Transverse colon (tissue), 4 donors: ENCODE measurements at regions of chr10 and their contacts with region 1.

Region 1: GRCh38 chr10:129971381-129972144 is 7.5 kb upstream of the EBF3 start:
- DNase-seq: peak; percentile 41
- H3K4me3 ChIP-seq: peak overlapping the region in 3 of 4 donors; percentile 14 to 34 (median 17)
- H3K27ac ChIP-seq: no peak overlapping the region
- H3K4me1 ChIP-seq: peaks cover 4 to 37% (median 17%) of the 10 kb centered on the region in 4 donors
- H3K27me3 ChIP-seq: peaks cover 98% of the 10 kb centered on the region
- CTCF ChIP-seq: peak in 2 of 5 experiments; percentile 42 to 44
- EP300 ChIP-seq: no peak
- POLR2A ChIP-seq: no peak

Region 2: DNA sequence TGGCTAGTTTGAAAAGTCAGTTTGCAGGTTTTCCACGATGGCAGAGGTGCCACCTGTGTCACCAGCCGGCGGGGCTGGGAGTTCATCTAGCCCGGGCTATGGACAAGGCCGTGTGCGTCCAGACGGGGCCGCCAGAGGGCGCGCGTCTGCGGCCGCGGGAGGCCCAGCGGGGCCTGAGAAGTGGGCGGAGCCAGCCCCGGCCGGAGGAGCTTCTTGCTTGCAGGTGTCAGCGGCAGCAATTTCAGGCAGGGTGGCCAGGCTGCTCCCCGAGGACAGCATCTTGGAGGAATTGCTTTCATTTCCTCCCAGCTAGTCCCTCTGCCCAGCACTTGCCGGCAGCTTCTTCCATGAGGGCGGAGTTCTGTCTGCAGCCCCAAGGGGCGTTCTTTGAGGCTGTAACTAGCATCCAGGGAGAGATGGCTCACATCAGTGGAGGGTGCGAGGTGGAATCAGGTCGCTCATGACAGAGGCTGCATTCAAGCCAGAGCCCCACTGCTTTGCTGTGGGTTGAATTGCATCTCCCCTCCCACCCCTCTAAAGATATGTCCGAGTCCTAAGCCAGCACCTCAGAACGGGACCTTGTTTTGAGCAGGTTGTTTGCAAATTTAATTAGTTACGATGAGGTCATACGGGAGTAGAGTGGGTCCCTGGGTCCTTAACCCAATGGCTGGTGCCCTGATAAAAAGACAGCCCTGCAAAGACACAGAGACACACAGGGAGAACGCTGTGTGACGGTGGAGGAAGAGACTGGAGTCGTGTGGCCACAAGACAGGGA is 1759.4 kb before region 1 on chr10:
- in situ Hi-C with region 1: no loop called
- intact Hi-C with region 1: loop called (anchors 5 kb)
- DNase-seq: peak; percentile 90
- H3K4me3 ChIP-seq: no peak overlapping the region
- H3K27ac ChIP-seq: no peak overlapping the region
- H3K4me1 ChIP-seq: peaks cover 0 to 9% (median 2%) of the 10 kb centered on the region in 4 donors
- H3K27me3 ChIP-seq: no peaks in the 10 kb centered on the region
- CTCF ChIP-seq: peak; percentile 78 to 98 (median 96)
- EP300 ChIP-seq: no peak
- POLR2A ChIP-seq: no peak

Region 3: GRCh38 chr10:130282492-130283233 is 311.1 kb after region 1 on chr10:
- in situ Hi-C with region 1: no loop called
- intact Hi-C with region 1: no loop called
- DNase-seq: no peak
- H3K4me3 ChIP-seq: no peak overlapping the region
- H3K27ac ChIP-seq: no peak overlapping the region
- H3K4me1 ChIP-seq: no peaks in the 10 kb centered on the region
- H3K27me3 ChIP-seq: no peaks in the 10 kb centered on the region
- CTCF ChIP-seq: no peak
- EP300 ChIP-seq: no peak
- POLR2A ChIP-seq: no peak

Region 4: DNA sequence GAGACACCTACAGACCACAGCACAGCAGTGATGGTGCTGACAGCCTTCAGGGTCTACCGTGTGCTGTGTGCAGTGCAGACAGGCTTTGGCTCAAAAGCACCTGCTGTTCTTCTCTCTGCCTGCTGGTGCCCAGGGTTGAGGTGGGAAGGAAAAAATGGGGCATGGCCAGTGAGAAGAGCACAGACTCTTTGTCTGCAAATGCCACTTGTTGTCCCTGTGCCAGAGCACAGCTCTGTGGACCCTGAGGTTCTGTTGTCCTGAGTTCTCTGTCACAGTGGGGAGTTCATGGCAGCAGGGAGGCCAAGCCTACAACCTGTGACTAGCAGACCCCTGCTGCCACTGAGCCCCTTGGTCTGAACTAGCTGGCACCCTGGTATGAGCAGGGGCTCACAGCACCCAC is 541.4 kb after region 1 on chr10:
- in situ Hi-C with region 1: no loop called
- intact Hi-C with region 1: no loop called
- DNase-seq: no peak
- H3K4me3 ChIP-seq: no peak overlapping the region
- H3K27ac ChIP-seq: no peak overlapping the region
- H3K4me1 ChIP-seq: no peaks in the 10 kb centered on the region
- H3K27me3 ChIP-seq: no peaks in the 10 kb centered on the region
- CTCF ChIP-seq: no peak
- EP300 ChIP-seq: no peak
- POLR2A ChIP-seq: no peak